T47D (cell line): ENCODE measurements at regions of chr12 and their contacts with region 1.

Region 1: DNA sequence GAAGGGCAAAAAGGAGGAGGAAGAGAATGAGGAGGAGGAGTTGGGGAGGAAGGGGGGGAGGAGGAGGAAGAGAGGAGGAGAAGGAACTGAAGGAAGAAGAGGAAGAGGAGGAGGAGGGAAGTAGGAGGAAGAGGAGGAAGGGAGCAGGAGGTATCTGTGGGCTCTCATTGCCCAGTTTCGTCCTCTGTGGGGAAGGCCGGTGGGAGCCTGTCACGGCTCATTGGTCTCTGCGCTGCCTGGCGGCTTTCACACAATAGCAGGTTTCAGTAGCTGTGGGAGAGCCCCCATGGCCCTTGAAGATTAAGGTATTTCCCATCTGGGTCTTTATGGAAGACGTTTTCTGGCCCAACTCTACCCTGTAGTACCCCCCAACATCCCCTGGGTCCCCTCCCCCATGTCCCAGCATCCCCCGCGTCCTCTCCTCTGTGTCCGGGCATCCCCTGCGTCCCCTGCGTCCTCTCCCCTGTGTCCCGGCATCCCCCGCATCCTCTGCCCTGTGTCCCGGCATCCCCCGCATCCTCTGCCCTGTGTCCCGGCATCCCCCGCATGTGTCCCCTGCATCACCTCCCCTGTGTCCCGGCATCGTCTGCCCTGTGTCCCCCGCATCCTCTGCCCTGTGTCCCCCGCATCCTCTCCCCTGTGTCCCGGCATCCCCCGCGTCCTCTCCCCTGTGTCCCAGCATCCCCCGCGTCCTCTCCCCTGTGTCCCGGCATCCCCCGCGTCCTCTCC is 278.2 kb upstream of the SFSWAP start:
- DNase-seq: no peak

Region 2: GRCh38 chr12:131222256-131223139 is 210.2 kb before region 1 on chr12:
- in situ Hi-C with region 1: loop called (anchors 10 kb)
- DNase-seq: no peak

Region 3: GRCh38 chr12:131573631-131574394 is 141.1 kb after region 1 on chr12:
- in situ Hi-C with region 1: no loop called
- DNase-seq: no peak

Region 4: DNA sequence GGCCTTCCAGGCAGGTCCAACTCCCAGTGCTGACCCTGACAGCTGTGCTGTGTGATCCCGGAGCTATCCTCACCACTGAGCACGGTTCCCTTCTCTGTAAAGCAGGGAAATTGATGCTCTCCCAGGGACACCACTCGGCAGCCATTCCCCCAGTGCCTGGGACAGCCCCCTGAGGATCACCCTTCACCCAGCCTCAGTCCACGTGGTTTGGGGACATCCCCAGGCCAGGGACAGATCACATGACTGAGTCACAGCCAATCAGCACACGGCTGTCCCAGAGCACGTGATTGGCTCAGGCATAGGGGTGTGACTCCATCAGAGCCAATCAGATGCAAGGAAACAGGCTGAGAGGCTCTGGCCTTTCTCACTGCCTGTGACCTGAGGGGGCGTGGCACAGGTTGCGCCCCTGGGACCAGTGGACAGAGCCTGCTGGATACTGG is 209.4 kb after region 1 on chr12:
- in situ Hi-C with region 1: no loop called
- DNase-seq: peak in 1 of 2 experiments; percentile 32